GM12878 (cell line): ENCODE measurements at regions of chr2 and their contacts with region 1.

Region 1: DNA sequence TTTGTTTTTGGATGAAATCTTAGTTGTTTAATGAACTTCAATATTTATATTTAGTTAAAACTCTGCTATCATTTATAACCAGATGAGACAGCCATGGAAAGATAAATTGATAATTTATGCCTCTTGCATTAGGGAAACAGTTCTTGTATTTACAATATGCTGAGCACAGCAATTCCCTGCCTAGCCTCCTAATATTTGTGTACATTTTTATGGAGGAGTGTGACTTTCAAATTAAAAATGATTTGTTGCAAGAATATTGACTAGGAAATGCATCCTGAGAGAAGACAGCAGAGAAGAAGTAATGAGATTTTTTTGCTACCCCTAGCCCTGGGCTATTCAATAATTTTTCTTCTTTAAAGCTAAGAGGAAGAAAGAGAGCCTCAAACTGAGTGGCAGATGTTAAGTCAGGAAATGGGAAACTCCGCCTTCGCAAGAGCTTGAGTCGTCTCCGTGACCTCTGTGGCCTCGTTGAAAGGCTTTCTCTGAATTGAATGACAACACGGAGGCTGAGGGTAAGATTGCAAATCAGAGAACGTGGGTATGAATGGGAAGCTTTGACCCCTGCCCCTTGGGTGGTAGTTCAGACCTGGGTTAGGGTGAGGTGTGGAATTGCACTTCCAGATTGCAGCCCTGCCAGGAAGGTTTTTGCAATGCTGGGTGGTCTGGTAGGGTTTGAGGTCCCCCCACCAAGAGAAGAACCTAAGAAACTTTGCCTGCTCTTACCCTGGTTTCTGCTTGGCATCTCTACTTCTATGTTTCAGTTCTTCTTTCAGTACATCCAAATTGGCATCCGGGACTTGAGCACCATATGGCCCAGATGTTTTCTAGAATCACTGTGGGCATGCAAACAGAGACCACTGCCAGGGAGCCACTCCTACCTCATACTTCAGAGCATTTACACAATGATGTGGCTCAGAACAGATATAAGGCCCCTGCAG is 210.3 kb upstream of the RBMS1 start:
- DNase-seq: peak; percentile 57
- ATAC-seq: peak; percentile 93
- H3K4me3 ChIP-seq: no peak overlapping the region
- H3K27ac ChIP-seq: no peak overlapping the region
- H3K4me1 ChIP-seq: peaks cover 5% of the 10 kb centered on the region; the same call in 1 of the 2 replicates
- H3K27me3 ChIP-seq: no peaks in the 10 kb centered on the region
- CTCF ChIP-seq: no peak
- EP300 ChIP-seq: no peak
- POLR2A ChIP-seq: no peak
- RAD21 ChIP-seq: no peak

Region 2: GRCh38 chr2:158795195-158795924 is 1908.6 kb before region 1 on chr2 and contains the start of gene DAPL1:
- CTCF ChIA-PET with region 1: no interaction called
- POLR2A ChIA-PET with region 1: no interaction called
- RAD21 ChIA-PET with region 1: no interaction called
- SMC1A ChIA-PET with region 1: no interaction called
- in situ Hi-C with region 1: no loop called
- intact Hi-C with region 1: loop called (anchors 10 kb)
- DNase-seq: no peak
- ATAC-seq: no peak
- H3K4me3 ChIP-seq: no peak within 1 kb of the TSS
- H3K27ac ChIP-seq: no peak within 1 kb of the TSS
- H3K4me1 ChIP-seq: no peaks in the 10 kb centered on the region
- H3K27me3 ChIP-seq: no peaks in the 10 kb centered on the region; a peak in 2 of 4 replicates
- CTCF ChIP-seq: no peak
- EP300 ChIP-seq: no peak
- POLR2A ChIP-seq: no peak
- RAD21 ChIP-seq: no peak
- polyA plus RNA-seq, gene DAPL1: not detected